Mammary epithelial cell (primary cell): ENCODE measurements at regions of chr17 and their contacts with region 1.

Region 1: DNA sequence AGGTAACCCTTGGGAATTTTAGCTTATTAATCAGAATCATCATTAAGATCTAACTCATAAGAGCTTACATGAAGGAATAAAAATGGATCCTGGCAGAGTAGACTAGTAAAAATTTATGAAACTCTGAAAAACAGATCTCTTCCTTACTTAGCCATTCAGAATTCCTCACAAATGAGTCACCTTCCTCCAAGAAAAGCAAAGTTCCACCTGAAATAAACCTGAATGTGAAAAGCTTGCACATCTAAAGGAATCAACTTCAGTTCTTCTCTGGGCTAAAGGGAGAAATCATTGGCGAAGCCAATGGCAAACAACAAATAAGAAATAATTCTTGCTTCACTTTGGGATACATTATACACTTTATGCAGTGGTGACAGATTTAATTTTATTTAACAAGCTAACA is 22.7 kb downstream of the MYO1D start:
- DNase-seq: peak; percentile 27
- H3K4me3 ChIP-seq: no peak overlapping the region
- H3K27ac ChIP-seq: no peak overlapping the region
- H3K4me1 ChIP-seq: peaks cover 17% of the 10 kb centered on the region
- H3K27me3 ChIP-seq: no peaks in the 10 kb centered on the region
- CTCF ChIP-seq: no peak

Region 2: GRCh38 chr17:32794533-32795246 is 59.5 kb before region 1 on chr17:
- CTCF ChIA-PET with region 1: no interaction called
- dilution Hi-C with region 1: loop called (anchors 5 kb)
- in situ Hi-C with region 1: no loop called
- intact Hi-C with region 1: no loop called
- DNase-seq: no peak
- H3K4me3 ChIP-seq: no peak overlapping the region
- H3K27ac ChIP-seq: no peak overlapping the region
- H3K4me1 ChIP-seq: no peaks in the 10 kb centered on the region
- H3K27me3 ChIP-seq: no peaks in the 10 kb centered on the region
- CTCF ChIP-seq: no peak

Region 3: GRCh38 chr17:32819035-32819434 is 35.2 kb before region 1 on chr17:
- CTCF ChIA-PET with region 1: no interaction called
- dilution Hi-C with region 1: no loop called
- in situ Hi-C with region 1: no loop called
- intact Hi-C with region 1: loop called (anchors 5 kb)
- DNase-seq: no peak
- H3K4me3 ChIP-seq: no peak overlapping the region
- H3K27ac ChIP-seq: no peak overlapping the region
- H3K4me1 ChIP-seq: no peaks in the 10 kb centered on the region
- H3K27me3 ChIP-seq: no peaks in the 10 kb centered on the region
- CTCF ChIP-seq: no peak